Dendritic cell treated with granulocyte-macrophage colony-stimulating factor and Interleukin-4, amounts not matched to agents 40 ng/mL and 50 ng/mL, for 4 days (primary cell): ENCODE measurements at regions of chr5 and their contacts with region 1.

Region 1: GRCh38 chr5:97183100-97183929 is at the start of gene RIOK2:
- H3K4me3 Mint-ChIP-seq: peak within 1 kb of the TSS; percentile 89
- H3K27ac Mint-ChIP-seq: peak within 1 kb of the TSS; percentile 96
- H3K4me1 Mint-ChIP-seq: peaks cover 30% of the 10 kb centered on the region
- H3K27me3 Mint-ChIP-seq: peaks cover 2% of the 10 kb centered on the region

Region 2: DNA sequence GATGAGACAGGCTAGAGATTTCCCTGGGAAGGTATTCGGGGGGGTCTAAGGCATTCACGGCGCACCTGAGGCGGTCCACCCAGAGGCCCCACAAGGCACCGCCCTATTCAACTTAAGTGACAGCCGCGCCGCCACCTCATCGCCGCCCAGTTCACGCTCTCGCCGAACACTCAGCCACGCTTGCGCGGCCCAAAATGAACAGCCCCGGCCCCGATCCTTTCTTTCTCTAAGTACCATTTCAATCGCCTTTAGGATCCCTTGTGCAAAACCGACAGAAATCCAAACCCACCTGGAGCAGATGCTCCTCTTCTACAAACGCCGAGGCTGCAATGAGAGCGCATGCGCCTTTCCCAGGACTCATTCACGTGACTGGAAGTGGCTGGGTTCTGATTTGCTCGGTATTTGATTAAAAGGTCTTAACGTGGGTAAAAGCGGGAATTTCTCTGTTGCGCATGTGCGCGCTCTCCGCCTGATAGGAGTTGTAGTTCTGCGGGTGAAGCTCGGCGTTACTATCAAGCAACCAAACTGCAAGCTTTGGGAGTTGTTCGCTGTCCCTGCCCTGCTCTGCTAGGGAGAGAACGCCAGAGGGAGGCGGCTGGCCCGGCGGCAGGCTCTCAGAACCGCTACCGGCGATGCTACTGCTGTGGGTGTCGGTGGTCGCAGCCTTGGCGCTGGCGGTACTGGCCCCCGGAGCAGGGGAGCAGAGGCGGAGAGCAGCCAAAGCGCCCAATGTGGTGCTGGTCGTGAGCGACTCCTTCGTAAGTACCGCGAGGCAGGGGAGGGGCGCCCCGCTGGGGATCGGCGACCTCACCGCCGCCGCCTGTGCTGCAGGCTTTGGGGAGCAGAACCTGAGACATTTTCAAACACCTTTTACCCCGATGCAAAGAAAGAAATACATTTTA is 1628.4 kb before region 1 on chr5 and contains the starts of genes ARSK and SKIC3:
- intact Hi-C with region 1: loop called (anchors 10 kb)
- H3K4me3 Mint-ChIP-seq: peak within 1 kb of the TSS; percentile 83
- H3K27ac Mint-ChIP-seq: peak within 1 kb of the TSS; percentile 85
- H3K4me1 Mint-ChIP-seq: peaks cover 23% of the 10 kb centered on the region
- H3K27me3 Mint-ChIP-seq: no peaks in the 10 kb centered on the region

Region 3: DNA sequence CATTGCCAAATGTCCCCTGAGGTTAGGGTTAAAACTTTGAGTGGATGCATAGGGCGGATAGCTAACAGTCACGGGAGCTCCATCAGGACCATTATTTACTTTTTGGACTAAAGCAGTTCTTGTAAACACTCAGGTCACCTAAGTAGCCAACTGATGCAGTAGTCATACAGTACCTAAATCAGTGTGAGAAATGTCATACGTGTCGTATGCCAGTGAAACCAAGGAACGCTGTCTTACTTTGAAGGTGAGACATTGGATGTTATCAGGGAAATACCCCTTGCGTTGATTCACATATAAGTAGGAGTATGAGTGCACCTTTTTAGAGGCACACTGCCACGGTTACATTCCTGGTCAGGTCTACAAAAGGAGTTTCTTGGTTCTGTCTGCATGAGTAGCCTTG is 145.5 kb before region 1 on chr5:
- intact Hi-C with region 1: no loop called
- H3K4me3 Mint-ChIP-seq: no peak overlapping the region
- H3K27ac Mint-ChIP-seq: no peak overlapping the region
- H3K4me1 Mint-ChIP-seq: no peaks in the 10 kb centered on the region
- H3K27me3 Mint-ChIP-seq: no peaks in the 10 kb centered on the region

Region 4: DNA sequence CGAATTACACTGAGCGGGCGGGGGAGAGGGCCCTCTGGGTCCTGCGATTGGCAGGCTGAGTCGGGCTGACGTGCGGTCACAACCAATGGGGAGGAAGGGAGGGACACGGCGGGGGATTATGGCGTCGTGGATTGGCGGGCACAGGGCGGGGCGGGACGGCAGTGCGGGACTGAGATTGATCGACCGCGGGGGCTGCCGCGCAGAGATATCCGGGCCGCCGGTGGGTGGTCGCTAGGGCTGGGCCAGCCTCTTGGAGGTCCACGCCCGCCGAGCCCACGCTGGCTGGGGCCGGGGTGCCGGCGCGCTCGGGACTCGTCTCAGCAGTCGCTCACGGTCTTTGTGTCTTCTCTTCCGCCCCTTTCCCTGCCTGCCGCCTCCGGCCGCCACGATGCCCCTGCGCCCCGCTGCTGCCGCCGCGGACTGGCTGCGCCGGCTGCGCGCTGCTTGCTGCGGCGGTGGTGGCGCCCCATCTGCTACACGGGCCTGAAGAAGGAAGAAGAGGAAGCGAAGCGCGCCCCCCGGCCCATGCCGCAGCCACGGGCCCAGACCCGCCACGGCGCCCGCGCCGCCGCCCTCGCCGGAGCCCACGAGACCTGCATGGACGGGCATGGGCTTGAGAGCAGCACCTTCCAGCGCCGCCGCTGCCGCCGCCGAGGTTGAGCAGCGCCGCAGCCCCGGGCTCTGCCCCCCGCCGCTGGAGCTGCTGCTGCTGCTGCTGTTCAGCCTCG is 1590.3 kb after region 1 on chr5 and contains the start of gene RGMB:
- intact Hi-C with region 1: loop called (anchors 5 kb)
- H3K4me3 Mint-ChIP-seq: peak within 1 kb of the TSS; percentile 83
- H3K27ac Mint-ChIP-seq: peak within 1 kb of the TSS; percentile 31
- H3K4me1 Mint-ChIP-seq: peaks cover 51% of the 10 kb centered on the region
- H3K27me3 Mint-ChIP-seq: peaks cover 93% of the 10 kb centered on the region

Region 5: GRCh38 chr5:98928873-98929696 is 1745.8 kb after region 1 on chr5 and contains the start of gene CHD1:
- intact Hi-C with region 1: loop called (anchors 5 kb)
- H3K4me3 Mint-ChIP-seq: peak within 1 kb of the TSS; percentile 100
- H3K27ac Mint-ChIP-seq: peak within 1 kb of the TSS; percentile 95
- H3K4me1 Mint-ChIP-seq: peaks cover 31% of the 10 kb centered on the region
- H3K27me3 Mint-ChIP-seq: no peaks in the 10 kb centered on the region